Activated CD8-positive, alpha-beta T cell treated with anti-CD3 and anti-CD28 coated beads, Interleukin-2, amount 10 ng/mL, durations not matched to agents 7 days and 5 days (primary cell): ENCODE measurements at regions of chr2 and their contacts with region 1.

Region 1: DNA sequence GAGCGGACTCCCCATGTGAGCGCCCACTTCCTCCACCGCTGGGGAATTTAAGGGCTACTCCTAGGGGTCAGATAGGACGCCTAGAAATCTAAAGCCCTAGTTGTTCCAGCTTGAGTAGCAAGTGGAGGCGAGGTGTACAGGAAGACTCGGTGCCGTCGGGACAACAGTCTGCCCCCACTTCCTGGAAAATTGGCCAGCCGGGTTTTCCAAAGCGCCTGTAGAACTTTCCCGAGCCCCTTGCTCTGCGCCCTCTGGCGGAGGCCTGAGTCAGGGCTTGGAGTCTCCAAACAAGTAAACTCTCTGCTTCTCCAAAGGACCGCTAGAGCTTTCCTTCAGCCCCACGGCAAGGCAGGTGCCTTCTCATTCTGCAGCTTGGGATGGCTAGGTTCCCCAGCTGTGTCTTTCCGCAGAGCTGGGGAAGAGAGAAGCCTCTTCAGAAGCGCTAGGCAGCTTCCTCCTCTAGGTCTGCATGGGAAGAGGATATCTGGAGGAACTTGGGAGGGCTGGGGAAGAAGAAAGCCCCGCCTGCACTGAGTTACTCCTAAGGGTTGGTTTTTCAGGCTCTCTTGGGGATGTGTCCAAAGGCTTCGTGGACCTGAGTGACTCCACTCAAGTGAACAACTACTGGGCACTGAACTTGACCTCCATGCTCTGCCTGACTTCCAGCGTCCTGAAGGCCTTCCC is 688 bp downstream of the SPR start:
- DNase-seq: peak; percentile 63
- ATAC-seq: peak; percentile 50
- H3K4me3 Mint-ChIP-seq: peak overlapping the region; percentile 65
- H3K27ac Mint-ChIP-seq: no peak overlapping the region
- H3K4me1 Mint-ChIP-seq: peaks cover 2% of the 10 kb centered on the region
- H3K27me3 Mint-ChIP-seq: peaks cover 39% of the 10 kb centered on the region

Region 2: DNA sequence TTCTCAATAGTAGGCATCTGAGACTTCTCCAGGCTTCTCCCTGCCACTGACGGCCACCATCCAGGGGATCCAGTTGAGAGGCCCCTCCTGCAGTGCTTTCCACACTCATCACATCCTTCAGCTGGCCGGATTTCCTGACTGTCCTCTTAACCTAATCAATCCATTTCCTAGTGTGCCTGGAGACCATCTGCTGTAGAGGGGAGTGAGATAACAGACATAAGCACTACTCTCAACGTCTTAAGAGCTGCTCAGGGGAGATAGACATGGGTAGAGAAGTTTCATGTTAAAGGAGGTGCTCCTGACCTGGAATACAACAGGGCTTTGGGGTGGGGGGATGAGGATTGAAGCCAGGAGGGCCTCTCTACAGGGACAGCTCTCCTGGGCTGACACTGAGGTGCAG is 13.5 kb after region 1 on chr2:
- CTCF ChIA-PET with region 1: interaction called, 10 read pairs
- POLR2A ChIA-PET with region 1: no interaction called
- DNase-seq: no peak
- ATAC-seq: no peak
- H3K4me3 Mint-ChIP-seq: no peak overlapping the region
- H3K27ac Mint-ChIP-seq: no peak overlapping the region
- H3K4me1 Mint-ChIP-seq: no peaks in the 10 kb centered on the region
- H3K27me3 Mint-ChIP-seq: peaks cover 59% of the 10 kb centered on the region

Region 3: GRCh38 chr2:72953976-72954375 is 66.1 kb after region 1 on chr2:
- CTCF ChIA-PET with region 1: interaction called, 13 read pairs
- POLR2A ChIA-PET with region 1: no interaction called
- DNase-seq: peak; percentile 84
- ATAC-seq: peak; percentile 96
- H3K4me3 Mint-ChIP-seq: peak overlapping the region; percentile 79
- H3K27ac Mint-ChIP-seq: peak overlapping the region; percentile 92
- H3K4me1 Mint-ChIP-seq: peaks cover 40% of the 10 kb centered on the region
- H3K27me3 Mint-ChIP-seq: no peaks in the 10 kb centered on the region

Region 4: DNA sequence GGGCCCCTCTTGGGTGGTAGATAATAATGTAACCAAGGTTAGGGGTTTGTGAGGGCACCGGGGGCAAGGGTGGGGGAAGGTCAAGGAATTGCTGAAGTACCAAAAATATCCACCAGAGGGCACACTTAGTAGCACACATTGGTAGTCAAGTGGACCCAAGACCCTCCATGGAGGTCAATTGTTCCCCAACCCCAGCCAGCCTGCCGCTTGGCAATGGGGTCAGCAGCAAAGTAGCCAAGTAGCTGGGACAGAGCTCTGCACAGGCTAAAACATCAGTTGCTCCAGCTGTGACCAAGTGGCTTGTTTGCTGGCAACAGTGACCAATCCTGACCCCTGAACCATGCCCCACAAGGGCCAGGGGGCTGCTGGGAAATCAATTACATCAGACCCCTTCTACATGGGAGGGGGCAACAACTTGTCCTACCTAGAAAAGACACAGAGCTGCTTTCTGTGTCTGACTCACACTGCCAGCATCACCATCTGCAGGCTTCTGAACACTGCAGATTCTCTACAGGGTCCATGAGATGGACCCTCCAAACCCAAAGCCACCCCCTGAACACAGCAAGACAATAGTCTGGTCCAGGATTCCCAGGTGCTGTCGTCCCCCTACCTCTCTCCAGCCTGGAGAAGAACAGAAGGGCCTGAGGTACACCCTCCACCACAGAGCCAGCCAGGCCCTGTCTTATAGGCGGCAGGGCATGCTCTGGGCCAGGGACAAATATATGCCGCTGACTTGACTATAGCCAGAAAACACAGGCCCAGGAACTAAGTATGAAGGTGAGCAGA is 105.4 kb after region 1 on chr2:
- CTCF ChIA-PET with region 1: interaction called, 22 read pairs
- POLR2A ChIA-PET with region 1: no interaction called
- DNase-seq: peak; percentile 59
- ATAC-seq: peak; percentile 53
- H3K4me3 Mint-ChIP-seq: no peak overlapping the region
- H3K27ac Mint-ChIP-seq: no peak overlapping the region
- H3K4me1 Mint-ChIP-seq: no peaks in the 10 kb centered on the region
- H3K27me3 Mint-ChIP-seq: no peaks in the 10 kb centered on the region

Region 5: GRCh38 chr2:73163483-73164367 is 275.8 kb after region 1 on chr2:
- CTCF ChIA-PET with region 1: interaction called, 10 read pairs
- POLR2A ChIA-PET with region 1: no interaction called
- DNase-seq: peak; percentile 69
- ATAC-seq: peak; percentile 83
- H3K4me3 Mint-ChIP-seq: no peak overlapping the region
- H3K27ac Mint-ChIP-seq: no peak overlapping the region
- H3K4me1 Mint-ChIP-seq: no peaks in the 10 kb centered on the region
- H3K27me3 Mint-ChIP-seq: peaks cover 11% of the 10 kb centered on the region

Region 6: GRCh38 chr2:73601780-73602179 is 713.9 kb after region 1 on chr2:
- CTCF ChIA-PET with region 1: no interaction called
- POLR2A ChIA-PET with region 1: no interaction called
- DNase-seq: no peak
- ATAC-seq: no peak
- H3K4me3 Mint-ChIP-seq: no peak overlapping the region
- H3K27ac Mint-ChIP-seq: no peak overlapping the region
- H3K4me1 Mint-ChIP-seq: no peaks in the 10 kb centered on the region
- H3K27me3 Mint-ChIP-seq: no peaks in the 10 kb centered on the region